ENCODE measurements at regions of chr2 and their contacts with region 1.

Region 1: GRCh38 chr2:227238238-227239237 is 74.1 kb downstream of the COL4A3 start:
- DNase-seq: peak; percentile 61
- ATAC-seq: peak; percentile 79
- H3K4me3 ChIP-seq: no peak overlapping the region
- H3K27ac ChIP-seq: no peak overlapping the region
- H3K4me1 ChIP-seq: no peaks in the 10 kb centered on the region
- H3K27me3 ChIP-seq: peaks cover 8% of the 10 kb centered on the region
- CTCF ChIP-seq: peak; percentile 92
- POLR2A ChIP-seq: no peak
- RAD21 ChIP-seq: peak; percentile 64

Region 2: DNA sequence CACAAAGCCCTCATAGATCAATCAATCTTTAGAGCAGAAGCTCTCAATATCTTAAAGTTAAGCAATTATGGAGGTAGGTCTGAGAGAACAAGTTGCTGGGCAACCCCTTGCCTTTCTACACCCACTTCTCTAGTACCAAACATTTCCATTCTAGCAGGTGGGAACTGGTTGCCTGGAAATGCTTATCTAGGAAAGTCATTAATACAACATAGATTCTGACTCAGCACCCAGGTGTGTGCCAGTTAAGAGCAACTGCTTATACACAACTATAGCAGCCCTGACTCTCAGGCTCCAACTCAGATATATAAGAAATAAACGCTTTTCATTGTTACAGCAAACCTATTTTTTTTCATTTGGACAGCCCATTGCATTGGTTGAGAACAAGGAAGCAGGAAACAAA is 676.6 kb before region 1 on chr2:
- CTCF ChIA-PET with region 1: no interaction called
- POLR2A ChIA-PET with region 1: no interaction called
- dilution Hi-C with region 1: no loop called
- in situ Hi-C with region 1: no loop called
- intact Hi-C with region 1: no loop called
- DNase-seq: peak; percentile 39
- ATAC-seq: no peak
- H3K4me3 ChIP-seq: no peak overlapping the region
- H3K27ac ChIP-seq: no peak overlapping the region
- H3K4me1 ChIP-seq: peaks cover 2% of the 10 kb centered on the region; the same call in 1 of the 2 replicates
- H3K27me3 ChIP-seq: no peaks in the 10 kb centered on the region
- CTCF ChIP-seq: no peak
- POLR2A ChIP-seq: no peak
- RAD21 ChIP-seq: no peak

Region 3: DNA sequence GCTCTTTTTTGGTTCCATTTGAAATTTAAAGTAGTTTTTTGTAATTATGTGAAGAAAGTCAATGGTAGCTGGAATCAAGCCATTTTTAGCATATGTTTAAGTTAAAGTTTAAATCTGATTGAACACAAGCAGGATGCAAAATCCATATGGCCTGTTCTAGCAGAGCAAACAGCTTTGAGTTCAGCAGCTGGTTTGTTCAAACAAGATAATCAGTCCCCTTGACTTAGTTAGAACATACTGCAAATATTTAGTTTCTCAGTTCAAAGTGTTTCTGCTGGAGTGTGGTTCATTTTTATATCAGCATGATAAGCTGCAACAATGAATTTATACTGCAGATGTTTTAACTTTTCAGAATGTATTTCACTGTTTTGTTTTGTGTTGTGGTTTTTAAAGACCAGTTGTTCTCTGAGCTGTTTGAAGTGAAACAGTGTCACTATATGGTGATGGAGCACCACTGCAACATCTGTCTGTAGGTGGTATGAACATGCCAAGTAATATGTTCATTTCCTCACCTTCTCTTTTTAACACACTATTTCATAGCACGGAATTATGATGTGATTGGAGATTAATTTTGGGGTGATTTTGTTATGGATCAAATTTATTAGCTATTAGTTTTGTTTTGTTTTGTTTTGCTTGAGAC is 199.9 kb before region 1 on chr2:
- CTCF ChIA-PET with region 1: no interaction called
- POLR2A ChIA-PET with region 1: no interaction called
- dilution Hi-C with region 1: no loop called
- in situ Hi-C with region 1: no loop called
- intact Hi-C with region 1: loop called (anchors 5 kb)
- DNase-seq: no peak
- ATAC-seq: no peak
- H3K4me3 ChIP-seq: no peak overlapping the region
- H3K27ac ChIP-seq: no peak overlapping the region
- H3K4me1 ChIP-seq: no peaks in the 10 kb centered on the region
- H3K27me3 ChIP-seq: peaks cover 3% of the 10 kb centered on the region
- CTCF ChIP-seq: no peak
- POLR2A ChIP-seq: no peak
- RAD21 ChIP-seq: no peak

Region 4: DNA sequence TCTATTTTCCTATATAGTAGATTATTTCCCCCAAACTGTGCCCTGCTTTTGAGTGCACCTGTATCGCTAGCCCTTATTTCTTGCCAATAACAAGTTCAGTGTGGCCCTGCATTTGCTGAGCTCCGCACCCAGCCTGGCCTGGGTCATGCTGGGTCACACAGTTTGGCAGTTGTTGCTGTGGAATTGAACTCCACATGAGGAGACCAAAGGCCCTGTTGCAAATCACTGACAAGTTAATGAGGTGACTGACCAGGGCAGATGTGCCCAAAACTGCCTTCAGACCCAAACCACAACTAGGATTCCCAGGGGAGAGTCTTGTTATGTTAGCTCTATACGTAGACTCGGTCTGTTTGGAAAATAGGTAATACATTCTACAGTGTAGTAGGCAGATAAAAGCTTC is 105.6 kb before region 1 on chr2:
- CTCF ChIA-PET with region 1: interaction called, 10 read pairs
- POLR2A ChIA-PET with region 1: no interaction called
- dilution Hi-C with region 1: no loop called
- in situ Hi-C with region 1: loop called (anchors 5 kb)
- intact Hi-C with region 1: loop called (anchors 1 kb)
- DNase-seq: no peak
- ATAC-seq: no peak
- H3K4me3 ChIP-seq: no peak overlapping the region
- H3K27ac ChIP-seq: no peak overlapping the region
- H3K4me1 ChIP-seq: no peaks in the 10 kb centered on the region
- H3K27me3 ChIP-seq: peaks cover 38% of the 10 kb centered on the region
- CTCF ChIP-seq: no peak
- POLR2A ChIP-seq: no peak
- RAD21 ChIP-seq: no peak

Region 5: GRCh38 chr2:227228061-227228667 is 10.4 kb before region 1 on chr2:
- CTCF ChIA-PET with region 1: interaction called, 12 read pairs
- POLR2A ChIA-PET with region 1: no interaction called
- dilution Hi-C with region 1: no loop called
- in situ Hi-C with region 1: no loop called
- intact Hi-C with region 1: no loop called
- DNase-seq: no peak
- ATAC-seq: no peak
- H3K4me3 ChIP-seq: no peak overlapping the region
- H3K27ac ChIP-seq: no peak overlapping the region
- H3K4me1 ChIP-seq: no peaks in the 10 kb centered on the region
- H3K27me3 ChIP-seq: peaks cover 10% of the 10 kb centered on the region
- CTCF ChIP-seq: no peak
- POLR2A ChIP-seq: no peak
- RAD21 ChIP-seq: no peak

Region 6: DNA sequence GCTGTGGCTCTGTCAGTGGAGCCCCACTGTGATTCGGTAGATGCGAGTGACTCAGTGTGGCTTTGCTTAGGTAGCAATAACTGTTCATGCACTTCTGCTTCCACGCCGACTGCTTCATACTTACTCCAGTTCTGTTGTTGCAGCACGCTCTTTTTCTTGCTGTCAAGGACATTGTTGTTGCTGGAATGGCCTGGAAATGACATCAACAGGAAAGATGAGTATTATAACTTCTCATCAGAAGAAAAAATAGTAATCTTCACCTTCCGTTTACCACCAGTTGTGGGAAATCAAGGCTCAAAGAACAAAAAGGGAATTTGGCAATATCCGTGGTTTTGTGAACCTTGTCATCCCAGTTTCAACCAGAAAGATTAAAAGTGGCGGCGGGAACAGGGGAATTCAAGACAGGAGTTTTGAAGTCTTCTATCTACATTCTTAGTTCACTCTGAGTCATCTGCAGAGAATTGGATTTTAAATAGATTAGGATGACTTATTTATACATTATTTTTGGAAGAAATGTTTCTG is 132.3 kb after region 1 on chr2:
- CTCF ChIA-PET with region 1: no interaction called
- POLR2A ChIA-PET with region 1: no interaction called
- dilution Hi-C with region 1: no loop called
- in situ Hi-C with region 1: no loop called
- intact Hi-C with region 1: no loop called
- DNase-seq: peak; percentile 85
- ATAC-seq: peak; percentile 50
- H3K4me3 ChIP-seq: peak overlapping the region; percentile 27; the same call in 1 of the 2 replicates
- H3K27ac ChIP-seq: peak overlapping the region; percentile 51; the same call in 1 of the 2 replicates
- H3K4me1 ChIP-seq: peaks cover 13% of the 10 kb centered on the region
- H3K27me3 ChIP-seq: no peaks in the 10 kb centered on the region
- CTCF ChIP-seq: no peak
- POLR2A ChIP-seq: no peak
- RAD21 ChIP-seq: no peak

Measured in IMR-90 (cell line).